Activated CD8-positive, alpha-beta T cell treated with anti-CD3 and anti-CD28 coated beads, Interleukin-2, amount 10 ng/mL, durations not matched to agents 7 days and 5 days (primary cell): ENCODE measurements at regions of chr1 and their contacts with region 1.

Region 1: DNA sequence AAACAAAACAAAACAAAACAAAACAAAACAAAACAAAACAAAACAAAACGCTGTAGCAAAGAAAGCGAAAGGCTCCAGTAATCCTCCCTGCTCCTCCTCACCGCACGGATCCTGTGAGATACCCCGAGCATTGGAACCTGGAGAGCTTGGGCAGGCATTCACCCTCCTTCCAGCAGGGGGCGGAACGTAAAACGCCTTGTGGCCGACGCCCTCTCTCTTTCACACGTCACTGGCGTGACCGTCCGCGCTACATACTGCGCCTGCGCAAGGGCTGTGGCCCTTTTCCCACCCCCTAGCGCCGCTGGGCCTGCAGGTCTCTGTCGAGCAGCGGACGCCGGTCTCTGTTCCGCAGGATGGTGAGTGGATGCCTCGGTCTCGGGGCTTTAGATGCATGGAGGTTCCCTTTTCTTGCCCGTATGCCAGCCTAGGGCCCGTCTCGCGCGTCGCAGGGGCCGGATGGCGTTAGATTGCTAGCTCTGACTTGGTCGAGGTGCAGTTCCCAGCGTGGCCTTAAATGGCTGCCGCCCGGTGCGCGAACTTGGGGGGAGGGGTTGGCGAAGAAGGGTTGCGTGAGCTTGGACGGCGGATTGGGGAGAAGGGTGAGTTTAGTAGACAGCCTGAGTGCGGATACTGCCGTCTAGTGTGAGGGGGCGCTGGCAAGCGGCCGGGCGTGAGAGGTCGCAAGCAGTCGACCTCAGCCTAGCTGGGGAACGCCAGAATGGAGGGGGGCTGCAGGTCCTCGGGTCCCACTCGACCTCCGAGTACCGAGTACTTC is at the start of gene RPL5:
- DNase-seq: peak; percentile 98
- ATAC-seq: peak; percentile 91
- H3K4me3 Mint-ChIP-seq: peak within 1 kb of the TSS; percentile 96
- H3K27ac Mint-ChIP-seq: peak within 1 kb of the TSS; percentile 98
- H3K4me1 Mint-ChIP-seq: peaks cover 43% of the 10 kb centered on the region
- H3K27me3 Mint-ChIP-seq: no peaks in the 10 kb centered on the region
- total RNA-seq, gene RPL5: 816 to 821 TPM

Region 2: DNA sequence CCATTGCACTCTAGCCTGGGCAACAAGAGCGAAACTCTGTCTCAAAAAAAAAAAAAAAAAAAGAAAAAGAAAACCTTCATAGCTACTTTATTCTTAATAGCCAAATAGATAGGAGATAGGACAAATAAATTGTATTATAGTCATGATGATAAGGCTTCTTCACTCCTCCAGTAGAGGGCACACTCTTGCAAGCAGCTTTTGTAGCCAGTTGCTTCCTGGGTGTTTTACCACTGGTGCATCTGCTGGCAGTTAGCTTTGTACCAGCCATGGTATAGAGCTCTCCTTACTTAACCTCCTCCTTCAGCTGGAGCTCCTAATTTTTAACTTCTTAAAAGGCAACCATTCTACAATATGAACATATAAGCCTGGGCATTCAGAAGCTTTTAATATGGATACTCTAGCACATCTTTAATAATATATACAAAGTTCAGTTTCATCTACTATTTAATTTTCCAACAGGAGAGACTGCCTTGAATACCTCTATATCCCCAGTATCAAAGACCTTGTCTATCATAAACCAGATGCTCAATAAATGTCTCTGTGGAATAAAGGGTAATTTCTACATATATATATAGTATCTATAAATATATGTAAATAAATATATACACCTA is 82.8 kb before region 1 on chr1:
- CTCF ChIA-PET with region 1: interaction called, 11 read pairs
- POLR2A ChIA-PET with region 1: no interaction called
- DNase-seq: peak; percentile 55
- ATAC-seq: no peak
- H3K4me3 Mint-ChIP-seq: no peak overlapping the region
- H3K27ac Mint-ChIP-seq: no peak overlapping the region
- H3K4me1 Mint-ChIP-seq: no peaks in the 10 kb centered on the region
- H3K27me3 Mint-ChIP-seq: peaks cover 7% of the 10 kb centered on the region

Region 3: DNA sequence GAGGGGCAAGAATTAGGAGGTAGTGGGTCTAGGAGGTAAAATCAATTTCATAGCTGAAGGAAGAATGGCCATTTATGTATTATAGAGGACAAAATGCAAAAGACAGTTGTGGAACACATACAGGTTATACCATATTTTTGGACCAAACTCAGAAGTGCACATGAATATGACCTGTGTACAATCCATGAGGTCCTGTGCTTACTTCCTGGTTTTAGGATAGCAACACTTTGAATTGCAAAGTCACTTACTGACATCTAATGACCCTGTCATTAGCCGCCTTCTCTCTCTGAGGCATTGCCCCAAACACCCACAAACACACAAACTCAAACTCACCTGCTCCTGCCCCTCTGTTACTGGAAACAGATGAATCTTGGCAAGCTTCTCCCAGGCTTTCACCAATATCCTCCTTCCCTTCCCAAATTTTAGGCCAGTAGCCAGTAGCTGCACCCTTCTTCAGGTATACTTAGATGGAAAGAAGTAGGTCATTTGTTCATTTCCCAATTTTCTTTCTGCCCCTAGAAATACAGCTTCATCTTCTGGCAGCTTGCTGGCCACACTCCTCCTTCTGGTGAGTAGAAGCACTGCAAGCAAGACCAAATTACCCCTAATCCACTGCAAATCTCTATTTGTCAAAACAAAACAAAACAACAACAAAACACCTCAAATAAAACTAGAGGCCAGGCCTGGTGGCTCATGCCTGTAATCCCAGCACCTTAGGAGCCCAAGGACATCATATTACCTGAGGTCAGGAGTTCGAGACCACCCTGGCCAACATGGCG is 13.8 kb before region 1 on chr1:
- CTCF ChIA-PET with region 1: interaction called, 13 read pairs
- POLR2A ChIA-PET with region 1: interaction called, 3 read pairs
- DNase-seq: peak; percentile 33
- ATAC-seq: peak; percentile 47
- H3K4me3 Mint-ChIP-seq: no peak overlapping the region
- H3K27ac Mint-ChIP-seq: no peak overlapping the region
- H3K4me1 Mint-ChIP-seq: no peaks in the 10 kb centered on the region
- H3K27me3 Mint-ChIP-seq: peaks cover 25% of the 10 kb centered on the region

Region 4: GRCh38 chr1:92843429-92844352 is 11.7 kb after region 1 on chr1:
- CTCF ChIA-PET with region 1: interaction called, 23 read pairs
- POLR2A ChIA-PET with region 1: interaction called, 6 read pairs
- DNase-seq: no peak
- ATAC-seq: no peak
- H3K4me3 Mint-ChIP-seq: no peak overlapping the region
- H3K27ac Mint-ChIP-seq: no peak overlapping the region
- H3K4me1 Mint-ChIP-seq: peaks cover 19% of the 10 kb centered on the region
- H3K27me3 Mint-ChIP-seq: no peaks in the 10 kb centered on the region

Region 5: DNA sequence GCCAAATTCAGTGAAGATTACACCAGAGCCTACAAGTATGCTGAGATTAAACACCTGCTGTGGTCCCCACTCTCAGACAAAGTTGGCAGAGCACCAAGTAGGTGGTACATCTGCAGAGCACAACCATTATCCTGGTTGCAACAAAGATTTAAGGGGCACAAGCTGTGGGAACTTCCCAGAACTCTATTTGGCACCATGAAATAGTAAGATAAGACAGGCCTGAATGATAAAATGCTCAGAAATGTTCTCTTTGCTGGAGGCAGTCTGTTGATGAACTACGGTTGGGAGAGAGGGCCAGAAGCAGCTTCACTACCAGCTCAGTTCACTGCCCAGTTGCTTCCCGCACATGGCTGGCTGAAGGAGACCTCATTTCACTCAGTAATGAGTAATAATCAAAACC is 19.8 kb after region 1 on chr1:
- CTCF ChIA-PET with region 1: interaction called, 25 read pairs
- POLR2A ChIA-PET with region 1: interaction called, 3 read pairs
- DNase-seq: no peak
- ATAC-seq: no peak
- H3K4me3 Mint-ChIP-seq: no peak overlapping the region
- H3K27ac Mint-ChIP-seq: no peak overlapping the region
- H3K4me1 Mint-ChIP-seq: peaks cover 7% of the 10 kb centered on the region
- H3K27me3 Mint-ChIP-seq: no peaks in the 10 kb centered on the region

Region 6: DNA sequence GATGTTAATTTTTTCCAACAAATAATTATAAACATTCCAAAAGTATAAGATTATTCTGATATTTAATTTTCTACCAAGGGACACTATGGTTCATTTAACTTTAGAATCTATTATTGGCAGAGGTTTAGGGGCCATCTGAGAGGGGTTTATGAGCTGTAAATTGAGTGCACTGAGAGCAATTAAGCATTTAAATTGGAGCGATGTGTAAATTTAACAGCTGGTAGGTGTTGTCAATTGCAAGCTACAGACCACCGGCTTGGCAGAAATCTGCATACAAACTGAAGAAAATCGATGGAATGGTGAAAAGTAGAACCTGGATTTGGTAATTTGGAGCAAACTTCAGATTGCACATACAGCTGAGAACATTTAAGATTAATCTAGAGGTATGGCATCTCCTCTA is 191.3 kb after region 1 on chr1:
- CTCF ChIA-PET with region 1: no interaction called
- POLR2A ChIA-PET with region 1: no interaction called
- DNase-seq: no peak
- ATAC-seq: no peak
- H3K4me3 Mint-ChIP-seq: no peak overlapping the region
- H3K27ac Mint-ChIP-seq: no peak overlapping the region
- H3K4me1 Mint-ChIP-seq: peaks cover 3% of the 10 kb centered on the region
- H3K27me3 Mint-ChIP-seq: peaks cover 19% of the 10 kb centered on the region